ENCODE measurements at regions of chr19 and their contacts with region 1.

Region 1: GRCh38 chr19:14890643-14891379 is 4.9 kb upstream of the OR7A17 start:
- DNase-seq: no peak
- ATAC-seq: no peak
- H3K4me3 ChIP-seq: no peak overlapping the region
- H3K27ac ChIP-seq: no peak overlapping the region
- H3K4me1 ChIP-seq: no peaks in the 10 kb centered on the region
- H3K27me3 ChIP-seq: no peaks in the 10 kb centered on the region; a peak in 1 of 4 replicates
- CTCF ChIP-seq: no peak
- EP300 ChIP-seq: no peak
- POLR2A ChIP-seq: no peak
- RAD21 ChIP-seq: no peak

Region 2: DNA sequence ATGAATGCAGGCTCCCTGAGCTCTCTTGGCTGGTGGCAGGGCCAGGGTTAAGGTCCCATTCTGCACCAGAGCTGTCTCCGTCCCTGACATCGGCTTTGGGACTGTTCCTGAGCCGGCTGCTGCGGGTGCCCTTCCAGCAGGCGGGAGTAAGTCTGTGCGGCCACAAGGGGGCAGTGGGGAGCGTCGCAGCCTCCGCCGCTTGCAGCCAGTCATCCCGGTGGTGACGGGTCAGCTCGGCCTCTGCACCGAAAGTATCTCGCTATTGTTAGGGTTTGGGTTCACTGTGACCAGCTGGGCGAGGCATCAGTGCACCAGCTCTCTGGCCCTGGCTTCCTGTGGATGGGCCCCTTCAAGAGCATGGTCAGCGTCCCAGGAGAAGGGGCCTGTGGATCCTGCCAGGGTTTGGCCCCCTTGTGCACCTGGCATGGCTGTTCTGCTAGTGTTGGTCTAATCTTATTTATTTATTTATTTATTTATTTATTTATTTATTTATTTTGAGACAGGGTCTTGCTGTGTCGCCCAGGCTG is 334.1 kb before region 1 on chr19:
- CTCF ChIA-PET with region 1: no interaction called
- POLR2A ChIA-PET with region 1: no interaction called
- RAD21 ChIA-PET with region 1: no interaction called
- SMC1A ChIA-PET with region 1: no interaction called
- in situ Hi-C with region 1: no loop called
- intact Hi-C with region 1: loop called (anchors 5 kb)
- DNase-seq: no peak
- ATAC-seq: peak; percentile 98
- H3K4me3 ChIP-seq: no peak overlapping the region
- H3K27ac ChIP-seq: no peak overlapping the region
- H3K4me1 ChIP-seq: peaks cover 9% of the 10 kb centered on the region
- H3K27me3 ChIP-seq: no peaks in the 10 kb centered on the region
- CTCF ChIP-seq: peak; percentile 90 to 98 (median 97)
- EP300 ChIP-seq: no peak
- POLR2A ChIP-seq: no peak
- RAD21 ChIP-seq: peak; percentile 48

Region 3: DNA sequence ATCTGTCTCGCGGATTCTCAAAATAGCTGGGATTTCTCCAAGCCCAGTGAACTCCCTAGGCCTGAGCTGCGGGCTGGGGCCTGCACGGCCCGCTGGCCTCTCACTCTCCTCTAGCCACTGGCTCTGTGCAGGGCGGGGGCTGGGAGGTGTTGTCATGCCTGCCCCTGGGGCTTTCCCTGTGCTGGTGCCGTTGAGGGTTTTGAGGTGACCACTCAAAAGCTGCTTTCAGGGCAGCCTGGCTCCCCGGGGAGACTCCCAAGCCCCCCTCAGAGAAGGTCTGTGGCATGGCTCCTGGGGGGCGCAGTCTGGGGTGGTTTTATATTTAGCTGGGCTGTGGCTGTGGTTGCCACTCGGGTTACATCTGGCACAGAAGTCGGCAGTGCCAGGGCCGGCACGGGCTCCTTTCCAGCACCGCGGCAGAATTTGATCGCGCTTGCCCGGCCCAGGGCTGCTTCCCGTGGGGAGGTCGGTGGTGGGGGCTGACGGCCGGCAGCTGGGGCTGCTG is 328.9 kb before region 1 on chr19:
- CTCF ChIA-PET with region 1: no interaction called
- POLR2A ChIA-PET with region 1: no interaction called
- RAD21 ChIA-PET with region 1: no interaction called
- SMC1A ChIA-PET with region 1: no interaction called
- in situ Hi-C with region 1: loop called (anchors 5 kb)
- intact Hi-C with region 1: loop called (anchors 5 kb)
- DNase-seq: no peak
- ATAC-seq: peak; percentile 79
- H3K4me3 ChIP-seq: no peak overlapping the region
- H3K27ac ChIP-seq: no peak overlapping the region; the same call in 1 of the 2 replicates
- H3K4me1 ChIP-seq: peaks cover 7% of the 10 kb centered on the region
- H3K27me3 ChIP-seq: no peaks in the 10 kb centered on the region
- CTCF ChIP-seq: no peak
- EP300 ChIP-seq: no peak
- POLR2A ChIP-seq: no peak
- RAD21 ChIP-seq: no peak

Region 4: DNA sequence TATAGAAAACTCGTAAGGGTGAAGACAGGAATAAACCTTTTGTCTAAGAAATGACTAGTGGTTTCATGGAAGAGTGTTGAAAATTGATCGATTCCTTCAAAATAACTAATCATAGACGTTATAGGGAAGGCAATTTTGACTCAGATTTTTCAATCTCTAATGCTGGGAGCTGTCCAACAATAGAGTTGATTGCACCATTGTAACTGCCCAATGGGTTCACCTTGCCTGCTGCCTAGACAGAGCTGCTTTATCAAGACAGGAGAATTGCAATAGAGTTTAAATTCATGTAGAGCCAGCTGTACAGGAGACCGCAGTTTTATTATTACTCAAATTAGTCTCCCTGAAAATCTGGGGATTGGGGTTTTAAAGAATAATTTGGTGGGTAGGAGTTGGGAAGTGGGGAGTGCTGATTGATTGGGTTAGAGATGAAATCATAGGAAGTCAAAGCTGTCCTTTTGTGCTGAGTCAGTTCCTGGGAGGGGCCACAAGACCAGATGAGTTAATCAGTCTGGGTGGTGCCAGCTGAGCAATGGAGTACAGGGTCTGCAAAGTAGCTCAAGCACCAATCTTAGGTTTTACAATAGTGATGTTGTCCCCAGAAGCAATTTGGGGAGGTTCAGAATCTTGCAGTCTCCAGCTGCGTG is 95.6 kb before region 1 on chr19:
- CTCF ChIA-PET with region 1: no interaction called
- POLR2A ChIA-PET with region 1: no interaction called
- RAD21 ChIA-PET with region 1: no interaction called
- SMC1A ChIA-PET with region 1: no interaction called
- in situ Hi-C with region 1: no loop called
- intact Hi-C with region 1: no loop called
- DNase-seq: no peak
- ATAC-seq: no peak
- H3K4me3 ChIP-seq: no peak overlapping the region
- H3K27ac ChIP-seq: no peak overlapping the region
- H3K4me1 ChIP-seq: no peaks in the 10 kb centered on the region
- H3K27me3 ChIP-seq: no peaks in the 10 kb centered on the region; a peak in 1 of 4 replicates
- CTCF ChIP-seq: no peak
- EP300 ChIP-seq: no peak
- POLR2A ChIP-seq: no peak
- RAD21 ChIP-seq: no peak

Region 5: DNA sequence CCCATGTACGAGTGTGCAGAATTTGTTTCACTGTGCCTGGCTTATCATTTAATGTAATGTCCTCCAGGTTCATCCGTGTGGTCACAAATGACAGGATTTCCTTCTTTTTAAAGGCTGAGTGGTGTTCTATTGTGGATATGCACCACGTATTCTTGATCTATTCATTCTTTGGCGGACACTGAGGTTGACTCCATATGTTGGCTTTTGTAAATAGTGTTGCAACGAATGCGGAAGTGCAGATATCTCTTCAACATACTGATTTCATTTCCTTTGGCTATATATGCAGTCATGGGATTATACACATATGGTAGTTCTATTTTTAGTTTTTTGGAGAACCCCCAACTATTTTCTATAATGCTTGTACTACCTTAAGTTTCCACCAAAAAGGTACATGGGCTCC is 68.9 kb before region 1 on chr19:
- CTCF ChIA-PET with region 1: no interaction called
- POLR2A ChIA-PET with region 1: no interaction called
- RAD21 ChIA-PET with region 1: no interaction called
- SMC1A ChIA-PET with region 1: no interaction called
- in situ Hi-C with region 1: no loop called
- intact Hi-C with region 1: no loop called
- DNase-seq: no peak
- ATAC-seq: no peak
- H3K4me3 ChIP-seq: no peak overlapping the region
- H3K27ac ChIP-seq: no peak overlapping the region
- H3K4me1 ChIP-seq: no peaks in the 10 kb centered on the region
- H3K27me3 ChIP-seq: no peaks in the 10 kb centered on the region
- CTCF ChIP-seq: no peak
- EP300 ChIP-seq: no peak
- POLR2A ChIP-seq: no peak
- RAD21 ChIP-seq: no peak

Region 6: GRCh38 chr19:14835041-14835453 is 55.8 kb before region 1 on chr19 and contains the starts of genes OR7A5 and OR7C1:
- CTCF ChIA-PET with region 1: no interaction called
- POLR2A ChIA-PET with region 1: no interaction called
- RAD21 ChIA-PET with region 1: no interaction called
- SMC1A ChIA-PET with region 1: no interaction called
- in situ Hi-C with region 1: no loop called
- intact Hi-C with region 1: no loop called
- DNase-seq: no peak
- ATAC-seq: no peak
- H3K4me3 ChIP-seq: no peak within 1 kb of the TSS
- H3K27ac ChIP-seq: no peak within 1 kb of the TSS
- H3K4me1 ChIP-seq: no peaks in the 10 kb centered on the region
- H3K27me3 ChIP-seq: no peaks in the 10 kb centered on the region; a peak in 1 of 4 replicates
- CTCF ChIP-seq: no peak
- EP300 ChIP-seq: no peak
- POLR2A ChIP-seq: no peak
- RAD21 ChIP-seq: no peak
- polyA plus RNA-seq, gene OR7A5: not detected
- polyA plus RNA-seq, gene OR7C1: 0.04 to 0.06 TPM

Region 7: DNA sequence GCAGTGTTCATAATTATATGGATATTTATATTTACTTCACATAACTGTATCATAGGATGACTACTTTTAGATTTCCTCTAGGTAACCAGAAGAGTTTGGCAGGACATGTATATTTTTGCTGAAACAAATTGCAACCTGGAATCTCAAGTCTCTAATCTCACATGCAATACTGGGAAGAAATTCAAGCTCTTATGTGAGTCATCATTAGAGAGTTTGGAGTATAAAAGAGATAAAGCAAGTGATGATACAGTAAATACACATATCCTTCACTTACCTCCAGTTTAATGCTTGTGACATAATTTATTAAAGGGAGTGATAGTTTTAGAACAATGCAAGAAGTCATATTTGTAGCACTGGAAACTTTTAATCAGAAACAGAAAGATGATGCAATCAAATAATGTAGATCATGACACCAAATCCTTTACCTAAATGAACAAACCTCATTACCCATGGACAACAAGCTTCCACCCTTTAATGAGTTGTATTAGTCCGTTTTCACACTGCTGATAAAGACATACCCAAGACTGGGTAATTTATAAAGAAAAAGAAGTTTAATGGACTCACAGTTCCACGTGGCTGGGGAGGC is 11.0 kb after region 1 on chr19:
- CTCF ChIA-PET with region 1: no interaction called
- POLR2A ChIA-PET with region 1: no interaction called
- RAD21 ChIA-PET with region 1: no interaction called
- SMC1A ChIA-PET with region 1: no interaction called
- in situ Hi-C with region 1: no loop called
- intact Hi-C with region 1: no loop called
- DNase-seq: no peak
- ATAC-seq: no peak
- H3K4me3 ChIP-seq: no peak overlapping the region
- H3K27ac ChIP-seq: no peak overlapping the region
- H3K4me1 ChIP-seq: no peaks in the 10 kb centered on the region
- H3K27me3 ChIP-seq: no peaks in the 10 kb centered on the region
- CTCF ChIP-seq: no peak
- EP300 ChIP-seq: no peak
- POLR2A ChIP-seq: no peak
- RAD21 ChIP-seq: no peak

Region 8: DNA sequence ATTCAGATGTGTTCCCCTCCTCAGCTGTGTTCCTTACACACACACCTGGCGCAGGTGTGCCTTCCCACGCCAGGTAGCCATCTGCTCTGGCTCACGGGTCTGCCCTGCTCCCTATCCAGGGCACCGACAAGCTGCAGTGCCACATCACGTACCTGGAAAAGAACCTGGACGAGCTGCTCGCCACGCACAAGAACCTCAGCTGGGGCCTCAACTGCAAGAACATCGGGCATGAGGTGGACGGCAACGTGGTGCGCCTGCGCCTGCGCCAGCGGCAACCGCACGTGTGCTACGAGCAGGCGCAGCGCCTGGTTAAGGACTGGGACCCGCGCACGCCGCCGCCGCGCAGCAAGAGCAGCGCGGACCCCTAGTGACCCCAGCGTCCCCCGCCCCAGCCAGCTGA is 131.9 kb after region 1 on chr19:
- CTCF ChIA-PET with region 1: no interaction called
- POLR2A ChIA-PET with region 1: interaction called, 13 read pairs
- RAD21 ChIA-PET with region 1: no interaction called
- SMC1A ChIA-PET with region 1: no interaction called
- in situ Hi-C with region 1: no loop called
- intact Hi-C with region 1: no loop called
- DNase-seq: no peak
- ATAC-seq: no peak
- H3K4me3 ChIP-seq: no peak overlapping the region
- H3K27ac ChIP-seq: no peak overlapping the region
- H3K4me1 ChIP-seq: no peaks in the 10 kb centered on the region
- H3K27me3 ChIP-seq: no peaks in the 10 kb centered on the region; a peak in 1 of 4 replicates
- CTCF ChIP-seq: no peak
- EP300 ChIP-seq: no peak
- POLR2A ChIP-seq: no peak
- RAD21 ChIP-seq: no peak

Measured in GM12878 (cell line).